ENCODE measurements at regions of chr9 and their contacts with region 1.

Region 1: DNA sequence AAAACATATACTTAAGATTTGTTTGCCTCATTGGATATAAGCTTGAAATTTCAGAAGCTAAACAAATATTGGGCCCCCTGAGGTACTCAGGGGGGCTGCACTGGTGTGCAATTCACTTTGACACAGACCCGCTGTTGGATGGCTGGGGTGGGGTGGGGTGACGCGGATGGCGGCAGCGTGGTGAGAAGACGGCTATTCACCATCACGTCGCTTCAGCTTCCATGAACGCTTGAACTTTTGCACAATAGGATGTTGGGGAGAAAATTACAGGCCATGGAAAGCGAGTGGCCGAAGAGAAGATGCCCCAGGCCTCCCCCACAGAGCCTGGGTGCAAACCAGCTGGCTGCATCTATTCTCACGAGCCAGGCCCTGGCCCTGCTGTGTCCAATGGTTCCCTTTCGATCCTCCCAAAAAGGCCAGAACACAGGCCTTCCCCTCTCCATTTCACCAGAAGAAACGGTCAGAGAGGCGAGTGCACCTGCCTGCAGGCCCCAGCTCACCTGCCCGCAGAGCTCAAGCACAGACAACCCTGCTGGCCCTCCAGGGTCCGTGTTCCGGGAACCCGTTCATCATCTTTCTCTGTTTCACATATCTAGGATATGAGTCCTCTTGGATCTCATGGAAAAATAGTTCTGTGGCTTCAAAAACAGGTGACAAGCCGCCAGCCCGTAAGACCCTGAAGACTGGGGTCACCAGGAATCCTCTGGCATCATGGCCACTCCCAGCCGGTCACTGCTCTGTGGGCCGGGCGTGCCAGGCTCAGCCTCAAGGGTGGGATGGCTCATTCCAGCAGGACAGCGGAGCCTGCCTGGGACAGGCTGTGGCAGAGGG is 46.8 kb upstream of the SARDH start:
- DNase-seq: no peak

Region 2: DNA sequence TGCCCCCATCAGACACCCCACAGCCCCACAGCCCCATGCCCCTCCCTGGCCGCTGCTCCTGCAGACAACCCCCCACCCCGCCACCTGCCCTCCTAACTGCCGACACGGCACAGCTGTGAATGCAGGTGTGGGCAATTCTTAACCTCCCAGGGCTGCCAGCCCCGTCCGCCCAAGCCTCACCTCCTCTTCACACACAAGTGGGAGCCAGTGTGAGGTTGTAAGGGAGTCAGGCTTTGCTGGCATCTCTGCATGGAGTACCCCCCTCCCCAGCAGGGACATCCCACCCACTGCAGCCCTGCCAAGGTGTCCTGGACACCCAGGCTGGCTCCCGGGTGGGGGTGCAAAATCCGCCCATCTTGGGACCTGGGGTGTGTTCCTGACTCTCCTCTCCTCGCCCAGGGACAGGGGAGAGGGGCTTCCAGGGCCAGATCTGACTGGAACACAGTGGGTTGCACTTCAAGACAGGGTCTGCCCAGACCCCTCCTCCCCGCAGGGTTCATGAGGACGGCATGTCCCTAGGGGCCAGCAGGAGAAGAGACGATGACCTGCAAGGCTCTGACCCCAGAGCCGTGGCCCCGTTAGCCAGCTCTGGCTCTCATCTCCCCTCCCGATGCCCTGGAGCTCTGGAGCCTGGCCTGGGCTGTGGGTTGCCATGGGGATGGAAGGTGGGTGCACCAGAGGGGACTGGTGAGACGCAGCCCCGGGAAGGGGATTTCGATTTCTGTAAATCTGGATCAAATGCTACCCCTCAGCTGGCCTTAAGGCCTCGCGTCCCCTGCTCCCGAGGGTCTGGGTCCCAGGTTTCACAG is 81.2 kb before region 1 on chr9:
- intact Hi-C with region 1: no loop called
- DNase-seq: peak; percentile 74

Region 3: DNA sequence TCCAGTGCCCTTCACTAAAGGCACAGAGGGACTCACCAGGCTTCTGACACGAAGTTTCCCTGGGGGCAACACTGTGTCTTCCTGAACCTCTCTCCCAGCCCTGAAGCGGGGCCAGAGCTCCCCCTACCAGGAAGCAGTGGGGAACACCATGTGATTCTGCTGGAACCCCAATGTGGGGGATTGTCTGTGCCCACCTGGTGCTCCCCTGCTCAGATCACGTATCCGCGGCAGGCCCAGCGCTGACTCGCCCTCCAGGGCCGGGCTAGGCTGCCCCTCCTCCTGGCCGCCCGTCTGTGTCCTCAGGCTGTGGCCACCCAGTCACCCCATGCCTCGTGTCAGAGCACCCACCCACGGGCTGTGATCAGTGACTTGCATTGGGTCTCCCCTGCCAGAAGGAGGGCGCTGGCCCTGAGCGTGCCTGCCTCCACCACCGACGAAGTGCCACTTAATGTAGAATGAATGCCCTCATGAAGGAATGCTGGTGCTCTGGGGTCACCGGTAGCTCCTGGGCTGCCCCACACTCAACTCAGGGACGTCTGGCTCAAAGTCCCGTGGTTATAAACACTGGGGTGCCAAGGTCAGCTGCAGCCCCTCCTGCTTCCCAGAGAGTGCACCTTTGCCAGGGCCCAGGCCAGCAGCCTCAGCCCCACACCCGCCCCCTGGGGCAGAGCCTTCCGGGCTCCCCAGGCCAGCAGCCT is 68.9 kb before region 1 on chr9:
- intact Hi-C with region 1: no loop called
- DNase-seq: peak; percentile 82

Region 4: DNA sequence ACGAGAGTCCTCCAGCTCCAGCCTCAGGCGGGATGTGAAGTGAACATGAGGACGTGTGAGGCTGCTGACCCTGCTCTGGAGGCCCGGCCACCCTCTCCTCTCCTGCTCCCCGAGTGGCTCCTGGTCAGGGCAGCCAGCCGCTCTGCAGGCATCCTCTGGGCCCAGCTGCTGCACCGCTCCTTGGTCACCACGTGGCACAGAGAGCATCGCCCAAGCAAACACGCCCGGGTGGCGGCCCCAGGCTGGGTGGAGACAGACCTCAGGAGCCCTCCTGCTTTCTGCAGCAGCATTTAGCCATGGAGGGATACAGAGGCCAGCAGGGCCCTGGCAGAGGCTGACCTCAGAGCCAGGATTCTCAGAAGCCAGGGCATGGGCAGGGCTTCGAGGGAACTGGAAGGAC is 22.9 kb after region 1 on chr9:
- intact Hi-C with region 1: loop called in 1 of 2 experiments (anchors 2 kb)
- DNase-seq: no peak

Measured in posterior vena cava (tissue), 2 donors.